Naive thymus-derived CD4-positive, alpha-beta T cell (primary cell): ENCODE measurements at regions of chrX and their contacts with region 1.

Region 1: GRCh38 chrX:100819837-100820666 is at the start of gene CSTF2:
- DNase-seq: peak; percentile 58 to 87 (median 81)
- ATAC-seq: peak; percentile 98
- H3K4me3 ChIP-seq: peak within 1 kb of the TSS; percentile 68
- H3K4me3 Mint-ChIP-seq: peak within 1 kb of the TSS; percentile 85 to 96 (median 91)
- H3K27ac ChIP-seq: peak within 1 kb of the TSS; percentile 80
- H3K27ac Mint-ChIP-seq: peak within 1 kb of the TSS; percentile 85 to 97 (median 93)
- H3K4me1 ChIP-seq: no peaks in the 10 kb centered on the region
- H3K4me1 Mint-ChIP-seq: peaks cover 5 to 10% (median 6%) of the 10 kb centered on the region in 7 donors
- H3K27me3 ChIP-seq: no peaks in the 10 kb centered on the region
- H3K27me3 Mint-ChIP-seq: peaks cover 0 to 12% (median 4%) of the 10 kb centered on the region in 5 donors
- total RNA-seq, gene CSTF2: 8.6 to 41.8 (median 16.1) TPM

Region 2: GRCh38 chrX:100405424-100405823 is 414.6 kb before region 1 on chrX:
- CTCF ChIA-PET with region 1: no interaction called
- POLR2A ChIA-PET with region 1: no interaction called
- intact Hi-C with region 1: no loop called
- DNase-seq: no peak
- ATAC-seq: no peak
- H3K4me3 ChIP-seq: no peak overlapping the region
- H3K4me3 Mint-ChIP-seq: no peak overlapping the region
- H3K27ac ChIP-seq: no peak overlapping the region
- H3K27ac Mint-ChIP-seq: no peak overlapping the region
- H3K4me1 ChIP-seq: no peaks in the 10 kb centered on the region
- H3K4me1 Mint-ChIP-seq: peaks cover 0 to 8% (median 3%) of the 10 kb centered on the region in 7 donors
- H3K27me3 ChIP-seq: peaks cover 0 to 4% of the 10 kb centered on the region in 2 donors
- H3K27me3 Mint-ChIP-seq: peaks cover 14 to 46% (median 32%) of the 10 kb centered on the region in 5 donors

Region 3: GRCh38 chrX:100636321-100636991 is 183.6 kb before region 1 on chrX and contains the start of gene TSPAN6:
- CTCF ChIA-PET with region 1: no interaction called
- POLR2A ChIA-PET with region 1: no interaction called
- intact Hi-C with region 1: loop called in 1 of 2 experiments (anchors 2 kb)
- DNase-seq: peak; percentile 35 to 81 (median 68)
- ATAC-seq: peak; percentile 99
- H3K4me3 ChIP-seq: peak within 1 kb of the TSS; percentile 50
- H3K4me3 Mint-ChIP-seq: peak within 1 kb of the TSS; percentile 80 to 99 (median 92)
- H3K27ac ChIP-seq: peak within 1 kb of the TSS; percentile 63
- H3K27ac Mint-ChIP-seq: peak within 1 kb of the TSS in 8 of 9 donors; percentile 50 to 94 (median 88)
- H3K4me1 ChIP-seq: no peaks in the 10 kb centered on the region
- H3K4me1 Mint-ChIP-seq: peaks cover 0 to 21% (median 15%) of the 10 kb centered on the region in 7 donors
- H3K27me3 ChIP-seq: no peaks in the 10 kb centered on the region
- H3K27me3 Mint-ChIP-seq: peaks cover 3 to 25% (median 10%) of the 10 kb centered on the region in 5 donors
- total RNA-seq, gene TSPAN6: 1.0 to 2.3 (median 1.9) TPM in 4 of 5 experiments, not detected in the other

Region 4: GRCh38 chrX:100928660-100929613 is 108.9 kb after region 1 on chrX and contains the start of gene XKRX:
- CTCF ChIA-PET with region 1: no interaction called
- POLR2A ChIA-PET with region 1: no interaction called
- intact Hi-C with region 1: loop called (anchors 2 to 10 kb)
- DNase-seq: peak in 8 of 9 donors; percentile 16 to 64 (median 41)
- ATAC-seq: peak; percentile 90
- H3K4me3 ChIP-seq: peak within 1 kb of the TSS; percentile 56
- H3K4me3 Mint-ChIP-seq: peak within 1 kb of the TSS; percentile 87 to 97 (median 95)
- H3K27ac ChIP-seq: peak within 1 kb of the TSS; percentile 65
- H3K27ac Mint-ChIP-seq: peak within 1 kb of the TSS in 8 of 9 donors; percentile 50 to 90 (median 86)
- H3K4me1 ChIP-seq: peaks cover 0 to 10% of the 10 kb centered on the region in 2 donors
- H3K4me1 Mint-ChIP-seq: peaks cover 8 to 57% (median 47%) of the 10 kb centered on the region in 7 donors
- H3K27me3 ChIP-seq: no peaks in the 10 kb centered on the region
- H3K27me3 Mint-ChIP-seq: no peaks in the 10 kb centered on the region
- total RNA-seq, gene XKRX: 0.10 to 3.4 (median 1.5) TPM

Region 5: GRCh38 chrX:101097546-101098453 is 277.7 kb after region 1 on chrX and contains the start of gene CENPI:
- CTCF ChIA-PET with region 1: no interaction called
- POLR2A ChIA-PET with region 1: interaction called, 3 read pairs
- intact Hi-C with region 1: loop called (anchors 2 kb)
- DNase-seq: peak; percentile 84 to 95 (median 93)
- ATAC-seq: peak; percentile 100
- H3K4me3 ChIP-seq: peak within 1 kb of the TSS; percentile 70
- H3K4me3 Mint-ChIP-seq: peak within 1 kb of the TSS; percentile 69 to 95 (median 90)
- H3K27ac ChIP-seq: peak within 1 kb of the TSS; percentile 84
- H3K27ac Mint-ChIP-seq: peak within 1 kb of the TSS; percentile 83 to 99 (median 93)
- H3K4me1 ChIP-seq: peaks cover 0 to 3% of the 10 kb centered on the region in 2 donors
- H3K4me1 Mint-ChIP-seq: peaks cover 0 to 28% (median 9%) of the 10 kb centered on the region in 7 donors
- H3K27me3 ChIP-seq: no peaks in the 10 kb centered on the region
- H3K27me3 Mint-ChIP-seq: no peaks in the 10 kb centered on the region
- total RNA-seq, gene CENPI: 0.24 to 18.4 (median 0.88) TPM

Region 6: DNA sequence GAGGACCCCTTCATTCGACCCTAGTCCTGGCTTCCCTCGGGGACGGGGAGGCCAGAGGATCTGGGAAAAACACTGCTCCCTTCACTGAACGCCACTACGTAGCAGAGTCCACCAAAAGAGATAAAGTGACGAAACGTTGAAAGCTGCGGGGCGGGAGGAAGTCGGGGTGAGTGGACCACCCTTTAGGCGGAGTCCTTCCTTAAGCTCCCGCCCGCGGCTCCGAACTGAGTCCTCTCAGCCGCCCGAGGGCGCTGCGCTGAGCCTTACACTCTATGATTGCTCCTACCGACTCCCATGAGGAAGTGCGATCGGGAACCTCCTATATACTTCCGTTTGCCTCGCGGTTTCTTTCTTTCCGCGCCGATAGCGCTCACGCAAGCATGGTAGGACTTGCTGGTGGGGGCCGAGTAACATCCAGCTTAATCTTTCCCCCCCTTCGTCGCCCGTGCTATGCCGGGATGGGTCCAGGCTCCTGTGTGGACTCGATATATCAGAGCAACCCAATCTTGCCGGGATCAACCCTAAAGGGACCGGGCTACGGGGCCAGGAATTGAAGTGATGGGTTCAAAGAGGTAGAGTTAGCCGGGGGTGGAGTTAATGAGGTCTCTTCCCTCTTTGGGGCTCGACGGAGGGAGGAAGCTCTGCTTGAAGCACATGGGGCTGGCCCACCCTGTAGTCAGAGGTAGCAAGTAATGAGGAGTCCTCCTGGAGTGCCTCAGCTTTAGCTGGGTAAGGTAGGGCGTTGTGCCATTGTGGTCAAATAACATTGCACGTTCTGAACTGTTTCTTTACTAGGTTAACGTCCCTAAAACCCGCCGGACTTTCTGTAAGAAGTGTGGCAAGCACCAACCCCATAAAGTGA is 570.8 kb after region 1 on chrX and contains the start of gene RPL36A:
- CTCF ChIA-PET with region 1: no interaction called
- POLR2A ChIA-PET with region 1: no interaction called
- intact Hi-C with region 1: loop called (anchors 1 to 2 kb)
- DNase-seq: peak; percentile 41 to 75 (median 66)
- ATAC-seq: peak; percentile 97
- H3K4me3 ChIP-seq: peak within 1 kb of the TSS; percentile 66
- H3K4me3 Mint-ChIP-seq: peak within 1 kb of the TSS; percentile 81 to 96 (median 90)
- H3K27ac ChIP-seq: peak within 1 kb of the TSS; percentile 80
- H3K27ac Mint-ChIP-seq: peak within 1 kb of the TSS; percentile 80 to 97 (median 94)
- H3K4me1 ChIP-seq: peaks cover 4 to 5% of the 10 kb centered on the region in 2 donors
- H3K4me1 Mint-ChIP-seq: peaks cover 0 to 35% (median 18%) of the 10 kb centered on the region in 7 donors
- H3K27me3 ChIP-seq: no peaks in the 10 kb centered on the region
- H3K27me3 Mint-ChIP-seq: no peaks in the 10 kb centered on the region
- total RNA-seq, gene RPL36A: 113 to 342 (median 282) TPM

Region 7: GRCh38 chrX:101931488-101932248 is 1111.6 kb after region 1 on chrX and contains the start of gene ZMAT1:
- CTCF ChIA-PET with region 1: no interaction called
- POLR2A ChIA-PET with region 1: interaction called, 3 read pairs
- intact Hi-C with region 1: loop called in 1 of 2 experiments (anchors 2 kb)
- DNase-seq: peak; percentile 73 to 92 (median 87)
- ATAC-seq: peak; percentile 93
- H3K4me3 ChIP-seq: peak within 1 kb of the TSS; percentile 63
- H3K4me3 Mint-ChIP-seq: peak within 1 kb of the TSS; percentile 80 to 95 (median 88)
- H3K27ac ChIP-seq: peak within 1 kb of the TSS; percentile 89
- H3K27ac Mint-ChIP-seq: peak within 1 kb of the TSS; percentile 87 to 99 (median 96)
- H3K4me1 ChIP-seq: peaks cover 0 to 8% of the 10 kb centered on the region in 2 donors
- H3K4me1 Mint-ChIP-seq: peaks cover 8 to 44% (median 33%) of the 10 kb centered on the region in 7 donors
- H3K27me3 ChIP-seq: no peaks in the 10 kb centered on the region
- H3K27me3 Mint-ChIP-seq: no peaks in the 10 kb centered on the region
- total RNA-seq, gene ZMAT1: 3.0 to 48.3 (median 32.2) TPM